Naive thymus-derived CD4-positive, alpha-beta T cell (primary cell): ENCODE measurements at regions of chr10 and their contacts with region 1.

Region 1: GRCh38 chr10:91378061-91378460 is 32.1 kb upstream of the HECTD2 start:
- DNase-seq: peak in 7 of 9 donors; percentile 35 to 61 (median 50)
- ATAC-seq: peak; percentile 88
- H3K4me3 ChIP-seq: no peak overlapping the region
- H3K4me3 Mint-ChIP-seq: peak overlapping the region in 4 of 10 donors; percentile 1 to 51 (median 15)
- H3K27ac ChIP-seq: no peak overlapping the region
- H3K27ac Mint-ChIP-seq: no peak overlapping the region
- H3K4me1 ChIP-seq: peaks cover 11 to 16% of the 10 kb centered on the region in 2 donors
- H3K4me1 Mint-ChIP-seq: peaks cover 0 to 38% (median 32%) of the 10 kb centered on the region in 7 donors
- H3K27me3 ChIP-seq: no peaks in the 10 kb centered on the region
- H3K27me3 Mint-ChIP-seq: peaks cover 7 to 40% (median 21%) of the 10 kb centered on the region in 5 donors

Region 2: GRCh38 chr10:91017198-91017597 is 360.9 kb before region 1 on chr10:
- CTCF ChIA-PET with region 1: no interaction called
- POLR2A ChIA-PET with region 1: no interaction called
- intact Hi-C with region 1: no loop called
- DNase-seq: no peak
- ATAC-seq: no peak
- H3K4me3 ChIP-seq: no peak overlapping the region
- H3K4me3 Mint-ChIP-seq: no peak overlapping the region
- H3K27ac ChIP-seq: no peak overlapping the region
- H3K27ac Mint-ChIP-seq: no peak overlapping the region
- H3K4me1 ChIP-seq: no peaks in the 10 kb centered on the region
- H3K4me1 Mint-ChIP-seq: no peaks in the 10 kb centered on the region
- H3K27me3 ChIP-seq: no peaks in the 10 kb centered on the region
- H3K27me3 Mint-ChIP-seq: peaks cover 2 to 23% (median 8%) of the 10 kb centered on the region in 5 donors

Region 3: DNA sequence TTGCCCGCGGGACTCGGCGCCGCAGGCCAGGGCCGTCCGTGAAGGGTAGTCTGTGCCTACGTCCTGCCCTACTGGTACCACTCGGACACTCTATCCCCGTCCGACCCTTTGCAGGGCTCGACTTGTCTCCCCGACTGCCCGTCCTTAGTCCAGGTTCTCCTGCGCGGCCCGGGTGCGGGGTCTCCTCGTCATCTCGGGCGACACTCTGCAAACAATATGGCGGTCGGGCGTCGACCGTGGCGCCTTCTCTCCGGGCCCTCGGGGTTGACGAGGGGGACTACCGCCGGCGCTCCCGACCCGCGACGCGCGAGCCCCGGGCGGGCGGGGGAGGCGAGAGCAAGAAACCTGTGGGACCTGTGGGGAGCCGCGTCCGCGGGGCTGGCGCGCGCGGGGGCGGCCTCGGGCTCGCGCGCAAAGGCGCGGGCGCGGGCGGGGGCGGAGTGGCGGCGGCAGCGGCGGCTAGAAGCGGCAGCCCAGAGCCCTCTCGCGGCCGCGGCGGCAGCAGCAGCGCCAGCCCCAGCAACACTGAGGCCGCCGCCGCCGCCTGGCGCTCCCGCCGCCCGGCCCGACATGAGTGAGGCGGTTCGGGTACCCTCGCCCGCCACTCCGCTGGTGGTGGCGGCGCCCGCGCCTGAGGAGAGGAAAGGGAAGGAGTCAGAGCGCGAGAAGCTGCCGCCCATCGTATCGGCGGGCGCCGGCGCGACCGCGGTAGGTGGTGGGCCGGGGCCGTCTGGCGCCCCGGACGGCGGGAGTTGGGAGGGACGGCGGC is 32.0 kb after region 1 on chr10 and contains the start of gene HECTD2:
- CTCF ChIA-PET with region 1: no interaction called
- POLR2A ChIA-PET with region 1: no interaction called
- intact Hi-C with region 1: loop called in 1 of 2 experiments (anchors 1 kb)
- DNase-seq: peak; percentile 76 to 89 (median 86)
- ATAC-seq: peak; percentile 93
- H3K4me3 ChIP-seq: peak within 1 kb of the TSS; percentile 83
- H3K4me3 Mint-ChIP-seq: peak within 1 kb of the TSS; percentile 75 to 93 (median 90)
- H3K27ac ChIP-seq: peak within 1 kb of the TSS; percentile 88
- H3K27ac Mint-ChIP-seq: peak within 1 kb of the TSS; percentile 81 to 96 (median 91)
- H3K4me1 ChIP-seq: peaks cover 8 to 17% of the 10 kb centered on the region in 2 donors
- H3K4me1 Mint-ChIP-seq: peaks cover 8 to 18% (median 13%) of the 10 kb centered on the region in 7 donors
- H3K27me3 ChIP-seq: no peaks in the 10 kb centered on the region
- H3K27me3 Mint-ChIP-seq: peaks cover 0 to 27% (median 0%) of the 10 kb centered on the region in 5 donors
- total RNA-seq, gene HECTD2: 1.1 to 4.6 (median 2.0) TPM